ENCODE measurements at regions of chr12 and their contacts with region 1.

Region 1: GRCh38 chr12:94596596-94596995 is 53.8 kb downstream of the TMCC3 start:
- DNase-seq: peak; percentile 49 to 99
- H3K4me3 ChIP-seq: no peak overlapping the region
- H3K27ac ChIP-seq: peak overlapping the region; percentile 81
- H3K4me1 ChIP-seq: peaks cover 52% of the 10 kb centered on the region
- H3K27me3 ChIP-seq: no peaks in the 10 kb centered on the region
- CTCF ChIP-seq: no peak

Region 2: GRCh38 chr12:93441617-93442410 is 1154.8 kb before region 1 on chr12 and contains the start of gene UBE2N:
- CTCF ChIA-PET with region 1: no interaction called
- POLR2A ChIA-PET with region 1: interaction called, 11 read pairs
- intact Hi-C with region 1: no loop called
- DNase-seq: peak; percentile 85 to 95
- H3K4me3 ChIP-seq: peak within 1 kb of the TSS; percentile 73
- H3K27ac ChIP-seq: peak within 1 kb of the TSS; percentile 83
- H3K4me1 ChIP-seq: peaks cover 31% of the 10 kb centered on the region
- H3K27me3 ChIP-seq: no peaks in the 10 kb centered on the region
- CTCF ChIP-seq: no peak
- total RNA-seq, gene UBE2N: 68.5 and 82.1 TPM in 2 replicates

Region 3: GRCh38 chr12:94560431-94561221 is 36.0 kb before region 1 on chr12:
- CTCF ChIA-PET with region 1: no interaction called
- POLR2A ChIA-PET with region 1: interaction called, 3 read pairs
- intact Hi-C with region 1: loop called (anchors 2 kb)
- DNase-seq: peak; percentile 94
- H3K4me3 ChIP-seq: peak overlapping the region; percentile 59
- H3K27ac ChIP-seq: peak overlapping the region; percentile 91
- H3K4me1 ChIP-seq: peaks cover 65% of the 10 kb centered on the region
- H3K27me3 ChIP-seq: no peaks in the 10 kb centered on the region
- CTCF ChIP-seq: no peak

Region 4: GRCh38 chr12:94615284-94616181 is 18.9 kb after region 1 on chr12:
- CTCF ChIA-PET with region 1: interaction called, 9 read pairs
- POLR2A ChIA-PET with region 1: interaction called, 3 read pairs
- intact Hi-C with region 1: loop called (anchors 1 kb)
- DNase-seq: peak; percentile 69 to 86
- H3K4me3 ChIP-seq: peak overlapping the region; percentile 48
- H3K27ac ChIP-seq: peak overlapping the region; percentile 91
- H3K4me1 ChIP-seq: peaks cover 68% of the 10 kb centered on the region
- H3K27me3 ChIP-seq: no peaks in the 10 kb centered on the region
- CTCF ChIP-seq: no peak

Region 5: DNA sequence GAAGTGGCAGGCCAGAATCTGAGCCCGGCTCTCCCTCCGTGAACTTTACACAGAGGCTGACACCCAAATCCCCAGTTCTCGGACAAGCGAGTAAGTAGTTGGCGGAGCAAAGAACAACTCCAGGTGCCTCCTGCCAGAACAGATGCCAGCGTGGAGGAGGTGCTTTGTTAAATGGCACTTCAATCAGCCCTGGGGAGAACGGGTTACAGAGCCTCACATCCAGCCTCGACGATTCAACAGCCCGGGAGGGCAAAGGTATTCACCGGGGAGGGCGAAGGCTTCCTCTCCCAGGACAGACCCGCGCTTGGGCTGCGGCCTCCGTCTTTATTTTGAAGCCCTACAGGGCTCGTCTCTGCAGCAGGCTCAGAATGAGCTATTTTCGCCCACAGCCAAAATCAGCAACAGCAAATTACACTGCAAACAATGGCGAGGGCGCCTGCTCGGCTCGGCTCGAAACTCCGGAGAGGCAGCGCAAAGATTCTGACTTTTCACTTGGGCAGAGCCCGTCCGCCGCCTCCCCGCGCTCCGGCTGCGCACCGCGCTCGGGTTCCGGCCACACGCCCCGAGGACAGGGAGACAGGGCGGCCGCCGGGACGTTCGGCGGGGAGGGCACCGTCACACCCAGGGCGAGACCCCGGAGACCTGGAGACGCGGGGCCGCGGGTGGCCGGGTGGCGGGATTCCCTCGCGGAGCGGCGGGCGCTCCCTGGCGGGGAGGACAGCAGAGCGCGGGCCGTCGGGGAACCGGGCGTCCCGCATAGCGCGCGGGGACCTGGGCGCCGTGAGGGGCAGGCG is 53.0 kb after region 1 on chr12:
- CTCF ChIA-PET with region 1: interaction called, 10 read pairs
- POLR2A ChIA-PET with region 1: no interaction called
- intact Hi-C with region 1: loop called (anchors 2 kb)
- DNase-seq: peak in 1 of 2 experiments; percentile 54
- H3K4me3 ChIP-seq: peak overlapping the region; percentile 91
- H3K27ac ChIP-seq: peak overlapping the region; percentile 69
- H3K4me1 ChIP-seq: peaks cover 41% of the 10 kb centered on the region
- H3K27me3 ChIP-seq: no peaks in the 10 kb centered on the region
- CTCF ChIP-seq: no peak; the same call in 1 of the 2 replicates

Measured in PC-9 (cell line).